A673 (cell line): ENCODE measurements at regions of chr1 and their contacts with region 1.

Region 1: GRCh38 chr1:183002267-183002666 is 21.0 kb upstream of the LAMC1 start:
- DNase-seq: no peak
- H3K4me3 ChIP-seq: no peak overlapping the region
- H3K27ac ChIP-seq: no peak overlapping the region
- H3K4me1 ChIP-seq: peaks cover 10% of the 10 kb centered on the region
- H3K27me3 ChIP-seq: no peaks in the 10 kb centered on the region
- CTCF ChIP-seq: no peak

Region 2: GRCh38 chr1:182533896-182534295 is 468.4 kb before region 1 on chr1:
- CTCF ChIA-PET with region 1: no interaction called
- POLR2A ChIA-PET with region 1: no interaction called
- intact Hi-C with region 1: no loop called
- DNase-seq: no peak
- H3K4me3 ChIP-seq: no peak overlapping the region
- H3K27ac ChIP-seq: no peak overlapping the region
- H3K4me1 ChIP-seq: no peaks in the 10 kb centered on the region
- H3K27me3 ChIP-seq: peaks cover 57% of the 10 kb centered on the region
- CTCF ChIP-seq: no peak

Region 3: DNA sequence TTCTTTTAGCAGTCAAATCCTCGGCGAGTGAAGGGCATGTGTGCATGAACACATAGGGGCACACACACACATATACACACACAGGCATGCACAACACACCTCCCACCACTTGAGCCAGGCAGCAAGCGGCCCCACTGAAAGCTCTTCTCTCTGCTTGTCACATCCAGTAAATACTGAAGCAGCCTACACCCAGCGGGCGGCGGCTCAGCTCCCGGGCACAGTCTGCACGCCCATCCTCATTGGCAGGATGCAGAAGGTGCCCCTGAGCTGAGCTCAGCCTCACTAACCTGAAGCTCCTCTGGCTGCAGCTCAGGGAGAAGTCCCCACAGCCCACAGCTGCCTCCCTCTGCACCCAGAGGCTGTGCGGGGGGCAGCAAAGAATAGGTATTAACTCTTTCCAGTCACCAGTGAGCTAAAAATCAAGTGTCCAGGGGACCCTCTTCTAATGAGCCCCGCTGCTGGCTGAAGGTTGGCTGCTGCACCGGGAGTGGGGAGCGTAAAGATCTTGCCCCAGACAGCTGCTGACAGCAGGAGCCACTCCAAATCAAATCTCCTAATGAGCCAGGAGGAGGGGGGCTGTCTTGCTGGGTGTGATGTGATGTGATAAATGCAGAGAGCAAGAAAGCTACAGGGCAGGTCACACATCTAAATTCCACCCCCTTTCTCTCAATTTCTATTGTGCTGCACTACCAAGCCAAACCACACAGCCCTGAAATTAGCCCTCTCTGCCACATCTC is 330.3 kb before region 1 on chr1:
- CTCF ChIA-PET with region 1: no interaction called
- POLR2A ChIA-PET with region 1: no interaction called
- intact Hi-C with region 1: no loop called
- DNase-seq: peak; percentile 41
- H3K4me3 ChIP-seq: no peak overlapping the region
- H3K27ac ChIP-seq: no peak overlapping the region
- H3K4me1 ChIP-seq: peaks cover 12% of the 10 kb centered on the region
- H3K27me3 ChIP-seq: no peaks in the 10 kb centered on the region
- CTCF ChIP-seq: no peak

Region 4: GRCh38 chr1:183019860-183020259 is 17.6 kb after region 1 on chr1:
- CTCF ChIA-PET with region 1: no interaction called
- POLR2A ChIA-PET with region 1: interaction called, 12 read pairs
- intact Hi-C with region 1: no loop called
- DNase-seq: no peak
- H3K4me3 ChIP-seq: no peak overlapping the region
- H3K27ac ChIP-seq: no peak overlapping the region
- H3K4me1 ChIP-seq: peaks cover 13% of the 10 kb centered on the region
- H3K27me3 ChIP-seq: no peaks in the 10 kb centered on the region
- CTCF ChIP-seq: no peak

Region 5: GRCh38 chr1:183139281-183139942 is 137.1 kb after region 1 on chr1:
- CTCF ChIA-PET with region 1: no interaction called
- POLR2A ChIA-PET with region 1: no interaction called
- intact Hi-C with region 1: no loop called
- DNase-seq: peak; percentile 42
- H3K4me3 ChIP-seq: no peak overlapping the region
- H3K27ac ChIP-seq: no peak overlapping the region
- H3K4me1 ChIP-seq: peaks cover 8% of the 10 kb centered on the region
- H3K27me3 ChIP-seq: no peaks in the 10 kb centered on the region
- CTCF ChIP-seq: no peak